ENCODE measurements at regions of chr1 and their contacts with region 1.

Region 1: GRCh38 chr1:183281553-183282091 is 95.6 kb downstream of the LAMC2 start:
- DNase-seq: peak; percentile 95 to 97
- H3K4me3 ChIP-seq: peak overlapping the region in 1 of 2 donors; percentile 21
- H3K27ac ChIP-seq: peak overlapping the region; percentile 68 to 85
- H3K4me1 ChIP-seq: peaks cover 0 to 49% (median 32%) of the 10 kb centered on the region in 4 donors
- H3K27me3 ChIP-seq: no peaks in the 10 kb centered on the region
- CTCF ChIP-seq: peak; percentile 86 to 98

Region 2: GRCh38 chr1:183306317-183307042 is 24.9 kb after region 1 on chr1:
- intact Hi-C with region 1: no loop called
- DNase-seq: no peak
- H3K4me3 ChIP-seq: no peak overlapping the region
- H3K27ac ChIP-seq: peak overlapping the region; percentile 49 to 78
- H3K4me1 ChIP-seq: peaks cover 0 to 90% (median 62%) of the 10 kb centered on the region in 4 donors
- H3K27me3 ChIP-seq: no peaks in the 10 kb centered on the region
- CTCF ChIP-seq: peak; percentile 16 to 26

Region 3: DNA sequence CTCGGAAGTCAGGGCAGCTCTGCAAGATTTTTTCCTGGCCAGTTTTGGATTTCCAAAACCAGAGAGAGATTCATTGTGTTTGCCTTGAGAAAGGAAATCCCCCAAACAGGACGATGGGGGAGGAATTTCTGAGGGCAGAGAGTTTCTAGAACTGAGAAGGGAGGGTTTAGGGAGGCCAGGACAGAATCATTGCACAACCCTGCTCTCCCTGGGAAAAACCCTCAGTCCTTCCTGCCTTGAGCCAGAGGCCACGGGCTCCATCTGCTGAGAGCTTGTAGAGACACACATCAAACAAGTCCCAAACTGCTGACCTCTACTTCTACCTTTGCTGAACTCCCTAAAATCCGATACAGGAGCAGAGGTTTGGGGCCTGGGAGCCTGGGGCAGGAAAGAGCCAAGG is 36.8 kb after region 1 on chr1:
- intact Hi-C with region 1: loop called (anchors 2 kb)
- DNase-seq: peak; percentile 88 to 91
- H3K4me3 ChIP-seq: no peak overlapping the region
- H3K27ac ChIP-seq: peak overlapping the region; percentile 73 to 82
- H3K4me1 ChIP-seq: peaks cover 0 to 31% (median 18%) of the 10 kb centered on the region in 4 donors
- H3K27me3 ChIP-seq: no peaks in the 10 kb centered on the region
- CTCF ChIP-seq: peak; percentile 82 to 83